ENCODE measurements at regions of chr11 and their contacts with region 1.

Region 1: DNA sequence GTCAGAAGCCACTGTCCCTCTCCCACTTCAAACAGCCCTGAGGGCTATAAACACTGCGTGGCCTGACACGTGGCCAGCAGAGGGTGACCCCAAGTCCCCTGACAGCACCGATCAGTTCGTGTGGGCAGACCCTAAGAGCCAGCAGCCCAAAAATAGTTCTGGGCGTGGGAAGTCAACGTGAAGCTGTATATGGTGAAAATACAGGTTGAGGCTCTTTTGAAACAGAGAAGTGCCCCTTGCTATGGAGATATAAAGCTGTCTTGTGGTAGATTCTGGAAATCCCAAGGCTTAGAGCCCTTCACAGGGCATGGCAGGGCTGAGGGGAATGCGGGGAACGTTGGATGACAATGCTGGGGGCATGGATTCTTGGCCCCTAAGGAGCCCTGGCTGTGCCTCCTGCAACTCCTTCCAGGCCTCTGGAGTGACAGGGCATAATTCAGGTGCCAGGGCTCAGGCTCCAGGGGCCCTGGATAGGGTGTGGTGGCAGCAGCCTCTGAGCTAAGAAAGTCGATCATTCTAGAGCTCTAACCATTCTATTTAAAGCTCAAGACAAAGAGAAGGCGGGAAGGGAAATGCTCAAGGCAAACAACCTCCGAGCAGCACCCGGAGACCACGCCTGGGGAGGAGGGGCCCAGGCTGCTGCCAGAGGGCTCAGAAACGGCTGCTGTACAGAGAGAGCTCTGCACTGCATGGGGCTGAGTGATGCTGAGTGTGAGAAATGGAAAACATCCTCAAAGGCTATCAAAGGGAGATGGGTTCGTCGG is 60.4 kb upstream of the CD5 start:
- DNase-seq: peak; percentile 93
- H3K4me3 Mint-ChIP-seq: peak overlapping the region; percentile 76
- H3K27ac Mint-ChIP-seq: peak overlapping the region; percentile 97
- H3K4me1 Mint-ChIP-seq: peaks cover 72% of the 10 kb centered on the region
- H3K27me3 Mint-ChIP-seq: no peaks in the 10 kb centered on the region

Region 2: GRCh38 chr11:60775420-60775961 is 266.4 kb before region 1 on chr11:
- CTCF ChIA-PET with region 1: no interaction called
- POLR2A ChIA-PET with region 1: no interaction called
- DNase-seq: peak; percentile 82
- H3K4me3 Mint-ChIP-seq: no peak overlapping the region
- H3K27ac Mint-ChIP-seq: no peak overlapping the region
- H3K4me1 Mint-ChIP-seq: peaks cover 4% of the 10 kb centered on the region
- H3K27me3 Mint-ChIP-seq: peaks cover 10% of the 10 kb centered on the region

Region 3: GRCh38 chr11:60913793-60914632 is 127.9 kb before region 1 on chr11 and contains the start of gene TMEM109:
- CTCF ChIA-PET with region 1: interaction called, 3 read pairs
- POLR2A ChIA-PET with region 1: interaction called, 11 read pairs
- DNase-seq: peak; percentile 88
- H3K4me3 Mint-ChIP-seq: peak within 1 kb of the TSS; percentile 96
- H3K27ac Mint-ChIP-seq: peak within 1 kb of the TSS; percentile 95
- H3K4me1 Mint-ChIP-seq: peaks cover 46% of the 10 kb centered on the region
- H3K27me3 Mint-ChIP-seq: peaks cover 7% of the 10 kb centered on the region
- total RNA-seq, gene TMEM109: 101 to 110 TPM

Region 4: DNA sequence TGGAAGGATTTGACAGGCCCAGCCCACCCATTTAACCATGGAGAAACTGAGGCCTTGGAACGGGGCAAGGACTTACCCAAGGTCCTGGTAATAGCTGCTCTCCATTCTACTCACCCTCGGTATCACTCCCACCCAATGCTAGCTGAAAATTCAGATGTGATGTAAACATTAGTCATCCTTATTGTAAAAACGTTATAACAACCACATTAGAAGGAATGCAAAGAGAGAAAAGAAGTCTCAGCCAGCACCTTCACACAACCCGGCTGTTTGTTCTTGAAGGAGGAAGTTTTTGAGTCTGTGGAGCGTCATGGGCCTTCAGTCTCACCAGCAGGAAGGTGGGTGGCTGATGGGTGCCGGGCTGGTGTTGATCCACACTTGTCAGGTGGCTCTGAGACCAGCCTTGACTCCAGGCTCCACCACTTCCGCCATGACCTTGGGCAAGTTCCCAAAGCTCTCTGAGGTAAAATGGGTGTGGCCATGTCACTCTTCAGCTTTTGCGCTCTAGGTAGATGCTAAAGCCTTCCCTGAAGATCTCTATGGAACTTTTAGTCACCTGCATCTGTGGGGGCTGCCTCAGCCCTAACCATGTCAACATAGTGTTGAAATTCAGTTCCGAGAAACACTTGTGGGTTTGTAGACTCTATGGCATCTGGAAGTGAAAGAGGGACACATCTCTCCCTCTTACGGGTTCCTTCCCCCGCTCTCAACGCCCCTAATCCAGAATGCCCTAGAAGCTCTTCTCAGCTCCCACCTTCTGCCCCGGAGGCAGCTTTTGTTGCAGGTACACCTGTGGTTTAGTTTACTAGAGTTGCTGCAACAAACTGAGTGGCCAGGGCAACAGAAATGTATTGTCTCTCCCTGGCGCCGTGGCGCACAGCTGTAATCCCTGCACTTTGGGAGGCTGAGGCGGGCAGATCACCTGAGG is 55.7 kb before region 1 on chr11:
- CTCF ChIA-PET with region 1: interaction called, 9 read pairs
- POLR2A ChIA-PET with region 1: interaction called, 60 read pairs
- DNase-seq: peak; percentile 90
- H3K4me3 Mint-ChIP-seq: peak overlapping the region; percentile 80
- H3K27ac Mint-ChIP-seq: peak overlapping the region; percentile 99
- H3K4me1 Mint-ChIP-seq: peaks cover 91% of the 10 kb centered on the region
- H3K27me3 Mint-ChIP-seq: no peaks in the 10 kb centered on the region

Region 5: GRCh38 chr11:61028272-61028761 is 13.6 kb before region 1 on chr11:
- CTCF ChIA-PET with region 1: interaction called, 7 read pairs
- POLR2A ChIA-PET with region 1: interaction called, 265 read pairs
- DNase-seq: peak; percentile 62
- H3K4me3 Mint-ChIP-seq: peak overlapping the region; percentile 72
- H3K27ac Mint-ChIP-seq: peak overlapping the region; percentile 86
- H3K4me1 Mint-ChIP-seq: peaks cover 88% of the 10 kb centered on the region
- H3K27me3 Mint-ChIP-seq: no peaks in the 10 kb centered on the region

Region 6: GRCh38 chr11:61071208-61071681 is 29.3 kb after region 1 on chr11:
- CTCF ChIA-PET with region 1: interaction called, 8 read pairs
- POLR2A ChIA-PET with region 1: interaction called, 227 read pairs
- DNase-seq: peak; percentile 83
- H3K4me3 Mint-ChIP-seq: peak overlapping the region; percentile 40
- H3K27ac Mint-ChIP-seq: peak overlapping the region; percentile 93
- H3K4me1 Mint-ChIP-seq: peaks cover 91% of the 10 kb centered on the region
- H3K27me3 Mint-ChIP-seq: no peaks in the 10 kb centered on the region

Region 7: GRCh38 chr11:61083601-61084147 is 41.7 kb after region 1 on chr11:
- CTCF ChIA-PET with region 1: interaction called, 53 read pairs
- POLR2A ChIA-PET with region 1: interaction called, 227 read pairs
- DNase-seq: peak; percentile 81
- H3K4me3 Mint-ChIP-seq: peak overlapping the region; percentile 82
- H3K27ac Mint-ChIP-seq: peak overlapping the region; percentile 96
- H3K4me1 Mint-ChIP-seq: peaks cover 61% of the 10 kb centered on the region
- H3K27me3 Mint-ChIP-seq: no peaks in the 10 kb centered on the region

Region 8: DNA sequence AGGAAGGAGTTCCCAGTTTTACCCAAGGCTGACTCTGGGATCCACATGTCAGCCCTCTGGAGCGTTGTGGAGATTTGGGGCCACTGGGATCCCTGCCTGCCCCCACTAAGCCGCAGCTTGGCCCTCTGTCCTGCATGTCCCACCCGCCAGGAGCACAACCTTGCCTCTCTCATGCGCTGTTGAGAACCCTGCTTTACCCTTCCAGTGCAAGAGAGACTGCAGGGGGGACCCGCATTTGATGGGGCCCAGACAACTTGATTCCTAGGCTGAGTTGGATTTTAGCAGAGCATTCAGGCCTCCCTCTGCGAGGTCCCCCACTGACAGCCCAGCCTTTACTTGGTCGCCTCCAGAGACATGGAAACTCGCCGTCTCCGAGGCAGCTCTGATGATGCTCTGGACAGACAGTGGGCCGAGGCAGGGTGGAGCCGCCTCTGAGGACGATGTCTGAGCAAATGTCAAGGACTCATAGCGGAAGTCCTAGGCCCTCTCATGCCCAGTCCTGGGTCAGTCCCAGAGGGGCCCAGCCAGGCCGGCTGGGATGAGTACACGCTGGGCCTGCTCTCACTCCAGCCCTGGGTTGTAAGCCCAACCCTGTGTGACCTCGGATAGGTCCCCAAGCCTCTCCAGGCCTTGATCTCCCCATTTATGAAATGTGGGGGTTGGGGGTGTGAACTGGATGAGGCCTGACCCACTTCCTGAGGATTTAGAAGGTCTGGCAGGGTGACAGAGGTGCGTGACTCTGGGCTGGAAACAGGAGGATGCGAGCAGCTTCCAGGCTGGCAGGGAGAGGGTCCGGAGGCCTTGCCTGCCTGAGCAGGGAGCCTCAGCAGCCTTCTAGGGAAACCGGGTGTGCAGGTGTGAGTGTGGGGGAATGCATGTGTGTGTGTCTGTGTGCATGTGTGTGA is 61.0 kb after region 1 on chr11:
- CTCF ChIA-PET with region 1: interaction called, 4 read pairs
- POLR2A ChIA-PET with region 1: interaction called, 34 read pairs
- DNase-seq: peak; percentile 46
- H3K4me3 Mint-ChIP-seq: no peak overlapping the region
- H3K27ac Mint-ChIP-seq: no peak overlapping the region
- H3K4me1 Mint-ChIP-seq: peaks cover 43% of the 10 kb centered on the region
- H3K27me3 Mint-ChIP-seq: no peaks in the 10 kb centered on the region

Region 9: DNA sequence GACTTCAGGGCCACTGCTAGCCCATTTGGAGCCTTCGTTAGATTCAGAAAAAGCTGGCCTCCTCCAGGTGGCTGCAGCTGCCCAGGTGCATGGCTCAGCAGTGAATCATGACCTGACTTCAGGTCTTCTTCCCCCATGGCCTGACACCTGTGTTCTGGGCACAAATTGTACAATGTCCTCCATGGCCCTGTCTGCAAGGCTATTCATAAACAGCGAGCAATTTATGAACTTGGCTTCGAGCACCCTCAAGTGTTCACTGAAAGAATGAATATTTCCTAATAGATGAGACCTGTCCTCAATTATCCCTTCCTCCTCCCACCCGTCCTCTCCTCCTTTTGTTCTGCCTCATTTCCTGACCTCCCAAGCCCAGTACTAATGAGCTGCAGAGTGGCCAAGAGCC is 131.5 kb after region 1 on chr11:
- CTCF ChIA-PET with region 1: no interaction called
- POLR2A ChIA-PET with region 1: no interaction called
- DNase-seq: no peak
- H3K4me3 Mint-ChIP-seq: no peak overlapping the region
- H3K27ac Mint-ChIP-seq: no peak overlapping the region
- H3K4me1 Mint-ChIP-seq: peaks cover 13% of the 10 kb centered on the region
- H3K27me3 Mint-ChIP-seq: peaks cover 10% of the 10 kb centered on the region

Measured in activated CD4-positive, alpha-beta memory T cell treated with anti-CD3 and anti-CD28 coated beads, Interleukin-2, amount 10 ng/mL, durations not matched to agents 7 days and 5 days (primary cell).